CD14-positive monocyte (primary cell): ENCODE measurements at regions of chr21 and their contacts with region 1.

Region 1: DNA sequence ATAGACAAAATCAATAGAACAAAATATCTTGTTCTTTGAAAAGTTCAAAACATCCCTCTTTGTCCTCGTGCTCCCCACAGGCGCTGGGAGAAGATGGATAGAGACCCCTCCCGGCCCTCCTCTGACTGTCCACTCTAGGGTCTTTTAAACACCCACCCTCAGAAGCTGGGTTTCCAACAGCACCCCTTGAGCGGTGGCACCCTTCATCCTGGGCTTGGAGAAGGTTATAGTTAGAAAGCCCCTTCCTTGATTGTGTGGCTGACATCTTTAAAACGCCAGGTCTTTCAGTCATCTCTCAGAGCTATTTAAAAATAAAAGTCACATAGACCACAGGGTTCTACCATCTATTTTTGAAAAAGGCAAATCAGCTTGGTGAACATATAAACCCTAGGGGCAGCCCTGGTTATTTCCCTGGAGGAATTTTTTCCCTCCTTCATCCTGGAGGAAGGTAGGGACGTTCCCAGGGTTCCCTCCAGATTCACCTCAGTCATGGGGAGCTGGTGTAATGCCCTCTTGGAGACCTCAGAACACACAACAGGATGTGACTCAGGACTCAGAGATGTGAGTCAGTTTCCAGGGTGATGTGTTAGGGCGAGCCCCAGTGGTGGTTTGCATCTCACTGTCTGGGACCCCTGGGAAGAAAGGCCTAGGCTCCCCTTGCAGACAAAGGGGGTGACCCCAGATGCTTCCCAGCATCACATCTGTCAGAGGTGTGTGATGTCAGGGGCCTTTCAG is 138.5 kb downstream of the CLIC6 start:
- DNase-seq: peak; percentile 90 to 98 (median 95)
- H3K4me3 ChIP-seq: peak overlapping the region in 1 of 3 experiments; percentile 14
- H3K4me3 Mint-ChIP-seq: peak overlapping the region in 1 of 2 donors; percentile 64
- H3K27ac ChIP-seq: peak overlapping the region; percentile 85 to 98
- H3K27ac Mint-ChIP-seq: peak overlapping the region; percentile 95 to 99 (median 98)
- H3K4me1 ChIP-seq: peaks cover 40 to 61% of the 10 kb centered on the region in 2 donors
- H3K4me1 Mint-ChIP-seq: peaks cover 77% of the 10 kb centered on the region
- H3K27me3 ChIP-seq: no peaks in the 10 kb centered on the region
- H3K27me3 Mint-ChIP-seq: no peaks in the 10 kb centered on the region
- CTCF ChIP-seq: no peak

Region 2: DNA sequence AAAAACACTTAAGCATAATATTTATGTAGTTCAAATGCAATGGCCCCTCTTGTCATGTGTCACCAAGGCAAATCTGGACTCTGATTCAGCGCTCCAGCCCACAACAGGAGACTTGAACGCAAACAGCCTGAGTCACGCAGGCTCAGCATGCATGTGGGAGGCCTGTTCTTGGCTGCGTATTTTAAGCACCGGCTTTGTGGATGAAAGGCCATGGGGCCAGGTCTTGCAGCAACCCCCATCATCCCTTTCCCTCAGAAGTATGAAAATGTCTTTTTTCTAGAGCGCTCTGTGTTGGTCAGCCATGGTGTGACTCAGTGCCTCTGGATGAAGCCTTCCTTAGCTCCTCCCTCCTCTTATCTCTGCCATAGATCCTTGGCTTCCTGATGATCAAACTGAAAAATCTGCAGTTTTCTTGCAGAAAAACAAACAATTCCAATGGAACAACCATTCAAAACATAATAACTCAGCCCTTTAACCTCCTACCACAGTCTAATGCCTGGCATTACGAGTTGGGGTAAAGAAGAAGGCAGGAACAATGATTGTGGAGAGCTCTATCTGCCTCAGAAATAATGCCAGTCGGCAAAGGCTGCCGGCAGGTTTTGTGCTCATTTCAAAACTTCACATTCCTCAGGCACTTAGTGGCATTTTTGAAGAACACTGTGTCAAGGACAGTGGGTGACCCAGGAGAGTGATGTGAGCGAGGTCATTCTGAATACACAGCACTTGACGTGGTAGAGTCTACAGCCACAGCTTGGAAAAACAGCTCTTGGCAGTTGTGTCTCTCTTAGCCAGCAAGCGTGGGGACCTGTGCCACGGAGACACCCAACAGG is 29.0 kb after region 1 on chr21:
- intact Hi-C with region 1: loop called in 1 of 2 experiments (anchors 2 kb)
- DNase-seq: peak; percentile 91 to 97 (median 93)
- H3K4me3 ChIP-seq: no peak overlapping the region
- H3K4me3 Mint-ChIP-seq: peak overlapping the region in 1 of 2 donors; percentile 49
- H3K27ac ChIP-seq: peak overlapping the region; percentile 81 to 89
- H3K27ac Mint-ChIP-seq: peak overlapping the region; percentile 93 to 98 (median 97)
- H3K4me1 ChIP-seq: peaks cover 41 to 59% of the 10 kb centered on the region in 2 donors
- H3K4me1 Mint-ChIP-seq: peaks cover 58% of the 10 kb centered on the region
- H3K27me3 ChIP-seq: no peaks in the 10 kb centered on the region
- H3K27me3 Mint-ChIP-seq: peaks cover 0 to 2% (median 2%) of the 10 kb centered on the region in 3 donors
- CTCF ChIP-seq: no peak

Region 3: GRCh38 chr21:34865928-34866284 is 58.6 kb after region 1 on chr21:
- intact Hi-C with region 1: loop called in 1 of 2 experiments (anchors 5 kb)
- DNase-seq: peak; percentile 86 to 94 (median 93)
- H3K4me3 ChIP-seq: peak overlapping the region in 1 of 3 experiments; percentile 36
- H3K4me3 Mint-ChIP-seq: peak overlapping the region; percentile 39 to 64
- H3K27ac ChIP-seq: peak overlapping the region; percentile 25 to 78
- H3K27ac Mint-ChIP-seq: peak overlapping the region; percentile 88 to 93 (median 90)
- H3K4me1 ChIP-seq: peaks cover 38 to 39% of the 10 kb centered on the region in 2 donors
- H3K4me1 Mint-ChIP-seq: peaks cover 54% of the 10 kb centered on the region
- H3K27me3 ChIP-seq: peaks cover 0 to 3% of the 10 kb centered on the region in 2 donors
- H3K27me3 Mint-ChIP-seq: peaks cover 11 to 17% (median 14%) of the 10 kb centered on the region in 3 donors
- CTCF ChIP-seq: no peak

Region 4: DNA sequence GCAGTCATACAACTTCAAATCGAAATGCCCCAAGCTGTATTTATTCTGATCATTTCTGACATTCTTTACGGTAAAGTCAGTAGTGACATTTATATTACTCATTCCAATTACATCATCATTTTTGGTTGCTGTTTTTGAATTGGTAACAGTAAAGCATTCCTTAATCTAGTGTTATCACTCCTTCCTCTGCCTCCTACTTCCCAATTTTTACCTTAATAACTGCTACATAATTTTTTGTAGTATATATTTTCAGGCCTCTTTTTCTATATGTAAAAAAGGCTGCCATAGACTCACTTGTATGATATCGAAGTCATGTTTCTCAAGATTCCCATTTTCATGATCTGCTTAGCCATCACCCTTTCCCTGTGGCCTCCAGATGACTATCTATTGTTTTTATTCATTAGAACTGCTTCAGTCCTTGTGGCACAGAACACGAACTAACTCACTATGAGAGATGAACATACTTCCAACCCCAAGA is 74.6 kb after region 1 on chr21:
- intact Hi-C with region 1: loop called (anchors 2 to 5 kb)
- DNase-seq: peak; percentile 12 to 89 (median 73)
- H3K4me3 ChIP-seq: peak overlapping the region; percentile 13 to 96 (median 44)
- H3K4me3 Mint-ChIP-seq: peak overlapping the region; percentile 69 to 98
- H3K27ac ChIP-seq: peak overlapping the region in 1 of 2 donors; percentile 98
- H3K27ac Mint-ChIP-seq: peak overlapping the region; percentile 91 to 99 (median 96)
- H3K4me1 ChIP-seq: peaks cover 37 to 51% of the 10 kb centered on the region in 2 donors
- H3K4me1 Mint-ChIP-seq: peaks cover 55% of the 10 kb centered on the region
- H3K27me3 ChIP-seq: no peaks in the 10 kb centered on the region
- H3K27me3 Mint-ChIP-seq: peaks cover 0 to 3% (median 0%) of the 10 kb centered on the region in 3 donors
- CTCF ChIP-seq: no peak

Region 5: GRCh38 chr21:35051287-35051818 is 244.0 kb after region 1 on chr21:
- intact Hi-C with region 1: loop called in 1 of 2 experiments (anchors 10 kb)
- DNase-seq: peak; percentile 92 to 94 (median 93)
- H3K4me3 ChIP-seq: peak overlapping the region in 1 of 3 experiments; percentile 93
- H3K4me3 Mint-ChIP-seq: peak overlapping the region; percentile 28 to 48
- H3K27ac ChIP-seq: peak overlapping the region; percentile 65 to 99
- H3K27ac Mint-ChIP-seq: peak overlapping the region; percentile 99 to 100 (median 100)
- H3K4me1 ChIP-seq: peaks cover 43 to 48% of the 10 kb centered on the region in 2 donors
- H3K4me1 Mint-ChIP-seq: peaks cover 40% of the 10 kb centered on the region
- H3K27me3 ChIP-seq: no peaks in the 10 kb centered on the region
- H3K27me3 Mint-ChIP-seq: peaks cover 0 to 6% (median 3%) of the 10 kb centered on the region in 3 donors
- CTCF ChIP-seq: peak; percentile 74